Astrocyte of the cerebellum (primary cell): ENCODE measurements at regions of chr6 and their contacts with region 1.

Region 1: DNA sequence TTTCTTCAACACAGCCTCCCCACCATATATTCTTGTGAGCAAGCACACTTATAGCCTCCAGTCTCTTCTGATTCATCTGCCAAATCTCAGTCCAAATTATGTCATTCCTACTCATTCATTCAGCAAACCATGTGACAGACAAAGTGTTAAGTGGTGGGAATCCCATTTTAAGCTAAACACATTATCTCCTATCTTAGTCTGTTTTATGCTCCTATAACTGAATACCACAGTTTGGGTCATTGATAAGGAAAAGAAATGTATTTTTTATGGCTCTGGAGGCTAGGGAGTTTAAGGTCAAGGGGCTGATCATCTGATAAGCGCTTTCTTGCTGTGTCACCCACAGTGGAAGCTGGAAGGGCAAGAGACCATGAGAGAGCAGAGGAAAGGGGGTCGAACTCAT is 23.9 kb upstream of the SMIM13 start:
- DNase-seq: no peak
- H3K4me3 ChIP-seq: no peak overlapping the region
- CTCF ChIP-seq: no peak

Region 2: GRCh38 chr6:10954590-10955010 is 115.2 kb before region 1 on chr6:
- in situ Hi-C with region 1: loop called (anchors 10 kb)
- DNase-seq: peak; percentile 66
- H3K4me3 ChIP-seq: no peak overlapping the region
- CTCF ChIP-seq: peak; percentile 89